PC-3 (cell line): ENCODE measurements at regions of chr9 and their contacts with region 1.

Region 1: DNA sequence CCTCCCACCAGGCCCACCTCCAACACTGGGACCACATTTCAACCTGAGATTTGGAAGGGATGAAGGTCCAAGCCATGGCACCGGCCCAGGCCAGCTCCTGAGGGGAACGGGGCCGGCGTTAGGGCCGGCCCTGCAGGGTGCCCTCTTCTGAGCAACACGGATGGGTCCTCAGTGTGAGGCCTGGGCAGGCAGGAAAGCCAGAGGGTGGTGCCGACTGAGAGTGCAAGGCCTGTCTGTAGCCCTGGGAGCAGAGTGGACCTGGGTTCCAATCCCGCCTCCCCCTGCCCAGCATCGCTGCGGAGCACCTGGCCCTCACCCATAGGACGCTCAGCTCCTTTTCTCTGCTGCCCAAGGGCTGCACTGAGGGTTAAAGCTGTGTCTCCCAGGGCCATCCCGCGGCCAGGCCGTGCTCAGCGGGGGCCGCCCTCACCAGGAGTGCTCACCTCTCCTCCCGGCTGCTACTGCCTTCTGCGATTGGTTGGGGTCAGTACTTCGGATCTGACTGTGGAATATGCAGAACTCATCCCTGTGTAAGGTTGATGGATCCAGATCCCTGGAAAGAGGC is 44.1 kb upstream of the FCN2 start:
- DNase-seq: no peak
- ATAC-seq: no peak
- H3K4me3 ChIP-seq: no peak overlapping the region
- H3K27ac ChIP-seq: no peak overlapping the region
- H3K4me1 ChIP-seq: no peaks in the 10 kb centered on the region
- H3K27me3 ChIP-seq: no peaks in the 10 kb centered on the region
- CTCF ChIP-seq: no peak

Region 2: GRCh38 chr9:134822541-134822940 is 13.9 kb before region 1 on chr9:
- CTCF ChIA-PET with region 1: no interaction called
- POLR2A ChIA-PET with region 1: interaction called, 11 read pairs
- intact Hi-C with region 1: no loop called
- DNase-seq: no peak
- ATAC-seq: no peak
- H3K4me3 ChIP-seq: no peak overlapping the region
- H3K27ac ChIP-seq: no peak overlapping the region
- H3K4me1 ChIP-seq: no peaks in the 10 kb centered on the region
- H3K27me3 ChIP-seq: no peaks in the 10 kb centered on the region
- CTCF ChIP-seq: no peak

Region 3: DNA sequence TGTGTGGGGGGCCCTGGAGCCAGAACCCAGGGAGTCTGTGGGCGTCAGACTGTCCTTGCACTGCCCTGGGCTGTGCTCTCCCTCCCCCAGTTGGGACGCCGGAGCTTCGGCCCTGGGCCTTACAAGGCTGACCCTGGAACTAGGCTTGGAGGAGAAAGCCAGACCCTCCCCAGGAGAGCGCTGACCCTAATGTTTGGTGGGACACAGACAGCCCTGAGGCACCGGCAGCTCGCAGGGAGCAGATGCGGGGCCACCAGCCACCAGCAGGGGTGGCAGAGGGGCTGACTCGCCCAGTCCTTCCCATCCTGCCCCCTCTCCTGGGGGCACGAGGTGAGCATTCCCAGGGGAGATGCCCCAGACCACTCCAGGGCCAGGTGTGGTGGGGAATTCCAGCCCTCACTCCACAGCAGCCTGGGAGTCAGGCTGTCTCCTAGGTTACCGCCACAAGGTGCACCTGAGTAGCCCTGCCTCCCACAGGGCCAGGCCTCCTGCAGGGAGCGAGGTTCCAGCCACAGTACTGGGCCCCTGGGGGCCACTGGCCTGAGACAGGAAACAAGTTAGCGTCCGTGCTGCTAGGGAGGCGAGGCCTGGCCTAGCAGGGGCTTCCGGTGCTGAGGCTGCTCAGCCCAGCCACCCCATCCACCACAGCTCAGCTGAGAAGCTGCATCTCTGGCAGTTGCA is 385.6 kb after region 1 on chr9:
- CTCF ChIA-PET with region 1: no interaction called
- POLR2A ChIA-PET with region 1: no interaction called
- intact Hi-C with region 1: no loop called
- DNase-seq: no peak
- ATAC-seq: no peak
- H3K4me3 ChIP-seq: no peak overlapping the region
- H3K27ac ChIP-seq: no peak overlapping the region
- H3K4me1 ChIP-seq: no peaks in the 10 kb centered on the region
- H3K27me3 ChIP-seq: peaks cover 19% of the 10 kb centered on the region
- CTCF ChIP-seq: no peak